Mammary epithelial cell (primary cell): ENCODE measurements at regions of chr1 and their contacts with region 1.

Region 1: DNA sequence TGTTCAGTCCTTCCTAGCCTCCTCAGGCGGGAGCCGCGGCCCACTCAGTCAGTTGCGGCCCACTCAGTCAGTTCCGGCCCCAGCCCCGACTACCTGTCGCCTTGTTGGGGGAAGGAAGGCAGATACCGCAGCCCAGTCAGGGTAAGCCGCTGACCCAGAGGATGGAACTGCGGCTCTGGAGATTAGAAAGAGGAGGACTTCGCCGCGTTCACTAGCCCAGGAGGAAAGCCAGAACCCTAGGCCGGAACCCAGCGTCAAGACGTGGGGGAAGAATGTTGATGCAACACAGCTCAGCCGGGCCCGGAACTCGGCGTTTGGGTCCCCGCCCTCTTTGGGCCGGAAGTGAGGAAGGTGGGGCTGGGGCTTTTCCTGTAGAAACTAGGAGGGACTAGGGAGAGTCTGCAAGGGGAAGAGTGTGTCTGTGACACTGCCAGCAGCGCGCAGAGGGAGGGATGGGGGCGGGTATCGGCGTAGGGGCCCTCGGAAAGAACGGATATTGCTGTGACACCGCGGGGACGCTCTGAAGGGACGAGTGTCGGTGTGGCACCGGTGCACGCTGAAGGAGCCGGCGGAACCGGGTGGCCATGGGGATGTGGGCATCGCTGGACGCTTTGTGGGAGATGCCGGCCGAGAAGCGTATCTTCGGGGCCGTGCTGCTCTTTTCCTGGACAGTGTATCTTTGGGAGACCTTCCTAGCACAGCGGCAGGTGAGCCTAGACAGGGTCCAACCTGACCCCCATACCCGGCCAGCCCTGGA is at the start of gene ZMPSTE24:
- DNase-seq: peak; percentile 98
- H3K4me3 ChIP-seq: peak within 1 kb of the TSS; percentile 85 to 93 (median 93)
- H3K27ac ChIP-seq: peak within 1 kb of the TSS; percentile 94
- H3K4me1 ChIP-seq: peaks cover 6% of the 10 kb centered on the region
- H3K27me3 ChIP-seq: no peaks in the 10 kb centered on the region
- CTCF ChIP-seq: no peak
- total RNA-seq, gene ZMPSTE24: 51.2 to 93.5 TPM

Region 2: GRCh38 chr1:39995973-39996393 is 261.9 kb before region 1 on chr1:
- CTCF ChIA-PET with region 1: no interaction called
- dilution Hi-C with region 1: no loop called
- in situ Hi-C with region 1: no loop called
- intact Hi-C with region 1: no loop called
- DNase-seq: no peak
- H3K4me3 ChIP-seq: no peak overlapping the region
- H3K27ac ChIP-seq: no peak overlapping the region
- H3K4me1 ChIP-seq: peaks cover 7% of the 10 kb centered on the region
- H3K27me3 ChIP-seq: no peaks in the 10 kb centered on the region
- CTCF ChIP-seq: no peak

Region 3: GRCh38 chr1:40161888-40162397 is 95.9 kb before region 1 on chr1:
- CTCF ChIA-PET with region 1: no interaction called
- dilution Hi-C with region 1: no loop called
- in situ Hi-C with region 1: no loop called
- intact Hi-C with region 1: loop called (anchors 1 kb)
- DNase-seq: no peak
- H3K4me3 ChIP-seq: peak overlapping the region; percentile 65 to 88 (median 78)
- H3K27ac ChIP-seq: peak overlapping the region; percentile 97
- H3K4me1 ChIP-seq: peaks cover 13% of the 10 kb centered on the region
- H3K27me3 ChIP-seq: no peaks in the 10 kb centered on the region
- CTCF ChIP-seq: peak in 1 of 2 donors; percentile 15

Region 4: GRCh38 chr1:40241362-40241761 is 16.5 kb before region 1 on chr1:
- CTCF ChIA-PET with region 1: no interaction called
- dilution Hi-C with region 1: no loop called
- in situ Hi-C with region 1: no loop called
- intact Hi-C with region 1: loop called (anchors 1 kb)
- DNase-seq: no peak
- H3K4me3 ChIP-seq: no peak overlapping the region
- H3K27ac ChIP-seq: peak overlapping the region; percentile 72
- H3K4me1 ChIP-seq: peaks cover 18% of the 10 kb centered on the region
- H3K27me3 ChIP-seq: no peaks in the 10 kb centered on the region
- CTCF ChIP-seq: no peak